ENCODE measurements at regions of chr13 and their contacts with region 1.

Region 1: DNA sequence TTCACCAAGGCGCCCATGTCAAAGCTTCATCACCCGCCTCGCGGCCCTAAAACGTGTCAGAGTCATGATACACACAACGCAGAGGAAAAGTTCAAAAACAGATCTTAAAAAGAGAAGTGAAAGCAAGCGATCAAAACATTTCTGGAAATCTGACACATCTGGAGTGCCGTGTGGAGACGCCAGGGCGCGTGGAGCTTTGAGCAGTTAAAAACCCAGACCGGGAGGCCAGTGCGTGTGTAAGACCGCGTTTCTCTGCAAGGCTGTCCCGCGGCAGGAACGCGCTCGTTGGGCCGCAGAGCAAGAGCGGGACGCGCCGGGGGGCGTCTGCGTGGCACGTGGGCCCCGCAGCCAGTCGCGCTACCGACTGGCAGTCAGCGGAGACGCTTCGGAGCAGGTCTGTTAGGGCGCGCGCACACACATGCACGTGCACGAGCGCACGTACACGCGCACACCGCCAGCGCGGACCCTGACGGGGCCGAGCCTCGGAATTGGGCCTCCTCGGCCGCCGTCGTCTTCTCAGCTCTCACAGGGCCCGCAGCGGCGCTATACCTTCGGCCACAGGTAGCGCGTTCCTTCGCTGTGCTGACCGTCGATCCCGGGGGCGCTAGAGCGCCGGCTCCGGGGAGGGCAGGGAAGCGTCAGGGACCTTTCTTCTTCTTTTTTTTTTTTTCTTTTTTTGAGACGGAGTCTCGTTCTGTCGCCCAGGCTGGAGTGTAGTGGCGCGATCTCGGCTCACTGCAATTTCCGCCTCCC is 35.8 kb downstream of the RNF6 start:
- DNase-seq: peak; percentile 77
- H3K4me3 ChIP-seq: peak overlapping the region; percentile 73
- H3K27ac ChIP-seq: peak overlapping the region; percentile 57
- H3K27me3 ChIP-seq: no peaks in the 10 kb centered on the region
- CTCF ChIP-seq: peak; percentile 38

Region 2: DNA sequence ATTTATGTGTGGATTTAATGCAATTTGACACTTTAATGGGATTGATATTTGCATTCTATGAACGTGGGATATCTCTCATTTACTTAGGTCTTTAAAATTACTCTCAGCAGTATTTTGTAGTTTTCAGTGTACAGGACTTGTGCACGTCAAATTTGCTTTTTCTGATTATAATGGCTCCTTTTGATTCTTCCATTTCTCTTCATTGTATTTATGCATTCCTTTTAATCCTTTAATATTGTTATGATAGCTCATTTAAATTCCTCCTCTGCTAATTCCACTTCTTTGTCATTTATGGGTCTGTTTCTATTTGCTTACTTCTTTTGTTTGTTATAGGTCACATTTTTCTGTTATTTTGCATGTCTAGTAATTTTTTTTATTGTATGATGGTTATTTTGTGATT is 587.9 kb before region 1 on chr13:
- CTCF ChIA-PET with region 1: no interaction called
- POLR2A ChIA-PET with region 1: no interaction called
- DNase-seq: no peak
- H3K4me3 ChIP-seq: no peak overlapping the region
- H3K27ac ChIP-seq: no peak overlapping the region
- H3K27me3 ChIP-seq: no peaks in the 10 kb centered on the region
- CTCF ChIP-seq: no peak

Region 3: GRCh38 chr13:26117620-26118019 is 68.7 kb before region 1 on chr13:
- CTCF ChIA-PET with region 1: no interaction called
- POLR2A ChIA-PET with region 1: no interaction called
- DNase-seq: no peak
- H3K4me3 ChIP-seq: no peak overlapping the region
- H3K27ac ChIP-seq: no peak overlapping the region
- H3K27me3 ChIP-seq: no peaks in the 10 kb centered on the region
- CTCF ChIP-seq: no peak

Region 4: GRCh38 chr13:26168237-26168820 is 18.0 kb before region 1 on chr13:
- CTCF ChIA-PET with region 1: interaction called, 13 read pairs
- POLR2A ChIA-PET with region 1: no interaction called
- DNase-seq: no peak
- H3K4me3 ChIP-seq: no peak overlapping the region
- H3K27ac ChIP-seq: no peak overlapping the region
- H3K27me3 ChIP-seq: peaks cover 4% of the 10 kb centered on the region
- CTCF ChIP-seq: no peak

Region 5: GRCh38 chr13:26202365-26202972 is 16.2 kb after region 1 on chr13:
- CTCF ChIA-PET with region 1: interaction called, 27 read pairs
- POLR2A ChIA-PET with region 1: no interaction called
- DNase-seq: no peak
- H3K4me3 ChIP-seq: no peak overlapping the region
- H3K27ac ChIP-seq: no peak overlapping the region
- H3K27me3 ChIP-seq: no peaks in the 10 kb centered on the region
- CTCF ChIP-seq: no peak

Region 6: DNA sequence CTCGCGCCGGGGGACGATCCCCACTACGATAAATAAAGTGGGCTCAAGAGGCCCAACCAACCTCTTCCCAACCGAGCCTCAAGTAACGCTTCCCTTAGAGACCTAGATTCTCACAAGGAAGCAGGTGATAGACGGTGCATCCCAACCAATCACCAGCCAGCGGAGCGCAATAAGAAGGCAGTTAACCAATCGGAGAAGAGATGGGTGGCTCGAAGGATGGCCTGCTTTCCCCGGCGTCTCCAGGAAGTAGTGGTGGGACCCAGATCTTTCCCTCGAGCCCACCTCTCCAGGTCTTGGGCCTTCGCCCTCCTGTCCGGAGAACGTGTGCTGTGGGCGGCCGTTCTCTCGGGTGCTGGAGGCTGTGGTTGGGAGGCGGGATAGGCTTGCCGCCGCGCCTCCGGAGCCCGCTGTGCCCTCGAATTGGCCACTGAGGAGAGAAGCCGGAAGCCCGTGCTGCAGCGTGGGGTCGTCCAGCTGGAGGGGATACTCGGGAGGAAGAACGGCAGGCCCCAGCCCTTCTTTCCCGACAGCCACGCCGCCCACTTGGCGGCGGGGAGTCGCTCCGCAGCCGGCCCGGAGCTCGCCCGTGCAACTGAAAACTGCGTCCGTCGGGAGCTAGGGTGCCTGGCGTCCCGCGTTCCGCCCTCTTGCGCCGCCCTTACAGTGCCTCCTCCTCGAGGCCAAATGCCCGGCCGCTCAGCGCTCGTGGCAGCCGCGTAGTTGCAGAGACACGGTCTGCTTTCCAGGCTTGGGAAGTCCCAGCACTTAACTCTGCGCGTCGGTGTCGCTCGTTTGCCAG is 35.6 kb after region 1 on chr13 and contains the start of gene RNF6:
- CTCF ChIA-PET with region 1: interaction called, 27 read pairs
- POLR2A ChIA-PET with region 1: interaction called, 4 read pairs
- DNase-seq: peak; percentile 98
- H3K4me3 ChIP-seq: peak within 1 kb of the TSS; percentile 86
- H3K27ac ChIP-seq: peak within 1 kb of the TSS; percentile 98
- H3K27me3 ChIP-seq: no peaks in the 10 kb centered on the region
- CTCF ChIP-seq: no peak
- polyA plus RNA-seq, gene RNF6: 30.5 and 42.5 TPM in 2 replicates

Region 7: DNA sequence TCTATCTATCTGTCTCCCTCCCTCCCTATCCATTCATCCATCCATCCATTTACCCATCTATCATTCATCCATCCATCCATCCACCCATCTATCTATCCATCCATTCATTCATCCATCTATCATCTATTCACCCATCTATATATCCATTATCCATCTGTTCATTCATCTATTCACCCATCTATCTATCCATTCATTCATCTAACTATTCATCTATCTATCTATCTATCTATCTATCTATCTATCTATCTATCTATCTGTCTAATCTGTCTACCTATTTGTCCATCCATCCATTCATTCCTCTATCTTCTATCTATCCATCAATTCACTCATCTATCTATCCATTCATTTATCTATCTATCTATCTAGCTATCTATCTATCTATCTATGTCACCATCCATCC is 63.3 kb after region 1 on chr13:
- CTCF ChIA-PET with region 1: no interaction called
- POLR2A ChIA-PET with region 1: no interaction called
- DNase-seq: no peak
- H3K4me3 ChIP-seq: no peak overlapping the region
- H3K27ac ChIP-seq: no peak overlapping the region
- H3K27me3 ChIP-seq: peaks cover 4% of the 10 kb centered on the region
- CTCF ChIP-seq: no peak

Region 8: DNA sequence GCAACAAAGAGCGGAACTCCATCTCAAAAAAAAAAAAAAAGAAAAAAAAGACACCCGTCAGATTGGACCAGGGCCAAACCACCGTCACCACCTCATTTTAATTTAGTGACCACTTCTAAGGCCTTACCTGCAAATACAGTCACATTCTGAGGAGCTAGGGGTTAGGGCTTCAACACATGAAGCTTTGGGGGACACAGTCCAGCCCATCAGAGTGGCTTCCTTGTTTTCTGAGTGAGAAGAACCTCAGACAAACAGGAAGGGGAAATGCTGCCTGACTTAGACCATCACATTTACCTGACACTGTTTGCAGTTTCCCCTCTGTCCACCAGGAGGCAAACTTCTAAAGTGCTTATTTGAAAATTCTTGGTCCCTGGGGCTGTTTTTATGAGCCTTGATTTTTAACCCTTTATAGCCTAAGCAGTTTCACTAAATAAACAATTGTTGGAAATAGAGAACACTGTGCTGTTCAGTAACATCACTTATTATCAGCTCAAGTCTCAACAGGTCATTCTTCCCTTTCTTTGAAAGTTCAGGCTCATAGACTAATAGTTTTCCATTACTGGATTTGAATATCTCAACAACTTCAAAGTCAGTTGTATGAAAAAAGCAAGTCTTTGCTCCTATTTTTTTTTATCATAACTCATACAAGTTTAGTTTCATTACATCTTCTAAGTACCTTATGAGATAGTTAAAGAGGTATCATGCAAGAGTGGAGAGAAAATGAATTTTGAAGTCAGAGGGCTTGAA is 296.3 kb after region 1 on chr13:
- CTCF ChIA-PET with region 1: interaction called, 28 read pairs
- POLR2A ChIA-PET with region 1: no interaction called
- DNase-seq: no peak
- H3K4me3 ChIP-seq: no peak overlapping the region
- H3K27ac ChIP-seq: no peak overlapping the region
- H3K27me3 ChIP-seq: peaks cover 1% of the 10 kb centered on the region
- CTCF ChIP-seq: peak; percentile 96

Region 9: GRCh38 chr13:26707122-26708006 is 521.1 kb after region 1 on chr13:
- CTCF ChIA-PET with region 1: interaction called, 15 read pairs
- POLR2A ChIA-PET with region 1: no interaction called
- DNase-seq: peak; percentile 7
- H3K4me3 ChIP-seq: no peak overlapping the region
- H3K27ac ChIP-seq: no peak overlapping the region
- H3K27me3 ChIP-seq: peaks cover 6% of the 10 kb centered on the region
- CTCF ChIP-seq: peak; percentile 65

Region 10: GRCh38 chr13:26929971-26930730 is 743.9 kb after region 1 on chr13:
- CTCF ChIA-PET with region 1: interaction called, 31 read pairs
- POLR2A ChIA-PET with region 1: no interaction called
- DNase-seq: peak; percentile 18
- H3K4me3 ChIP-seq: 0 out of 2 replicates have a peak overlapping the region, but pooled peaks have one; percentile 13
- H3K27ac ChIP-seq: no peak overlapping the region
- H3K27me3 ChIP-seq: peaks cover 14% of the 10 kb centered on the region
- CTCF ChIP-seq: peak; percentile 96

Measured in AG04450 (cell line).